Caki2 (cell line): ENCODE measurements at regions of chr20 and their contacts with region 1.

Region 1: GRCh38 chr20:50484276-50484976 is 25.8 kb upstream of the PTPN1 start:
- DNase-seq: no peak

Region 2: GRCh38 chr20:50286609-50287008 is 197.8 kb before region 1 on chr20:
- in situ Hi-C with region 1: loop called (anchors 10 kb)
- DNase-seq: peak; percentile 67

Region 3: GRCh38 chr20:50379049-50379990 is 105.1 kb before region 1 on chr20:
- in situ Hi-C with region 1: no loop called
- DNase-seq: no peak

Region 4: GRCh38 chr20:50788078-50788991 is 303.9 kb after region 1 on chr20:
- in situ Hi-C with region 1: loop called (anchors 10 kb)
- DNase-seq: peak; percentile 81